ENCODE measurements at regions of chr17 and their contacts with region 1.

Region 1: GRCh38 chr17:45640141-45640850 is 143.8 kb upstream of the CRHR1 start:
- DNase-seq: peak; percentile 57 to 71
- H3K4me3 ChIP-seq: no peak overlapping the region
- H3K27ac ChIP-seq: no peak overlapping the region
- H3K4me1 ChIP-seq: no peaks in the 10 kb centered on the region
- H3K27me3 ChIP-seq: no peaks in the 10 kb centered on the region
- CTCF ChIP-seq: peak; percentile 87 to 92 (median 88)
- POLR2A ChIP-seq: no peak

Region 2: DNA sequence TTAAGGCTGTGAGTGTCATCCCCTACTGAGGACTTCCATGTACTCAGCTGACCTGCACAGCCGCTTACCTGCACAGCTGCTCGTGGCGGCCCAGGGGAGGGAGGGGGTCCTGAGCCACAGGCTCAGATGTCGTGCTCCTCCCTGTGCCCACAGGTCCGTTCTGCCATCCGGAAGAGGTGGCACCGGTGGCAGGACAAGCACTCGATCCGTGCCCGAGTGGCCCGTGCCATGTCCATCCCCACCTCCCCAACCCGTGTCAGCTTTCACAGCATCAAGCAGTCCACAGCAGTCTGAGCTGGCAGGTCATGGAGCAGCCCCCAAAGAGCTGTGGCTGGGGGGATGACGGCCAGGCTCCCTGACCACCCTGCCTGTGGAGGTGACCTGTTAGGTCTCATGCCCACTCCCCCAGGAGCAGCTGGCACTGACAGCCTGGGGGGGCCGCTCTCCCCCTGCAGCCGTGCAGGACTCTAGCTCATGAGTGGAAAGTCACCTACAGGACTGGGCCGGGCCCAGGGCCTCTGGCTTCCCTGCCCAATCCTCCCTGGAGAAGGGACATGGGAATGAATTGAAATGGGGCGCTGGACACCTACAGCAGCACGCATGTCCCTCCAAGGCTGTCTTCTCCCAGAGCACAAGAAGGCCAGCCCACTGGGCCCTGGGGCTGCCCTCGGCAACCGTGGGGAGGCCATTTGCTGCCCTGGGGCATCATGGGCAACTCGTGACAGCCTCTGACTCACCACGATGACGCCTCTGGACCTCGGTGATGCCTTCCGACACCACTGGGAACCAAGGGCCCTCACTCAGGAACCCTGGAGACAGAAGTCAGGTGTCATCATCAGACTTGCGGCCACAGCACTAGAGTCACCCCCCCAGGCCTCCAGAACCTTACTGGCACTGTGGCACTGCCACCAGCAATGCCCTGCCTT is 194.4 kb after region 1 on chr17:
- intact Hi-C with region 1: loop called (anchors 5 kb)
- DNase-seq: no peak
- H3K4me3 ChIP-seq: no peak overlapping the region
- H3K27ac ChIP-seq: no peak overlapping the region
- H3K4me1 ChIP-seq: no peaks in the 10 kb centered on the region
- H3K27me3 ChIP-seq: no peaks in the 10 kb centered on the region
- CTCF ChIP-seq: no peak
- POLR2A ChIP-seq: no peak

Measured in uterus (tissue), 4 donors.